T-cell (primary cell): ENCODE measurements at regions of chr7 and their contacts with region 1.

Region 1: GRCh38 chr7:73572767-73573186 is 5.6 kb downstream of the TBL2 start:
- DNase-seq: no peak
- ATAC-seq: no peak
- H3K4me3 ChIP-seq: no peak overlapping the region
- H3K4me3 Mint-ChIP-seq: no peak overlapping the region
- H3K27ac ChIP-seq: no peak overlapping the region
- H3K27ac Mint-ChIP-seq: no peak overlapping the region
- H3K4me1 ChIP-seq: peaks cover 5 to 16% of the 10 kb centered on the region in 2 experiments
- H3K4me1 Mint-ChIP-seq: peaks cover 13 to 25% (median 24%) of the 10 kb centered on the region in 3 donors
- H3K27me3 ChIP-seq: no peaks in the 10 kb centered on the region
- H3K27me3 Mint-ChIP-seq: no peaks in the 10 kb centered on the region

Region 2: GRCh38 chr7:73351447-73352167 is 221.2 kb before region 1 on chr7:
- CTCF ChIA-PET with region 1: no interaction called
- POLR2A ChIA-PET with region 1: interaction called in 1 of 2 experiments, 18 read pairs
- DNase-seq: no peak
- ATAC-seq: no peak
- H3K4me3 ChIP-seq: no peak overlapping the region
- H3K4me3 Mint-ChIP-seq: no peak overlapping the region
- H3K27ac ChIP-seq: no peak overlapping the region
- H3K27ac Mint-ChIP-seq: no peak overlapping the region
- H3K4me1 ChIP-seq: no peaks in the 10 kb centered on the region
- H3K4me1 Mint-ChIP-seq: no peaks in the 10 kb centered on the region
- H3K27me3 ChIP-seq: no peaks in the 10 kb centered on the region
- H3K27me3 Mint-ChIP-seq: no peaks in the 10 kb centered on the region

Region 3: DNA sequence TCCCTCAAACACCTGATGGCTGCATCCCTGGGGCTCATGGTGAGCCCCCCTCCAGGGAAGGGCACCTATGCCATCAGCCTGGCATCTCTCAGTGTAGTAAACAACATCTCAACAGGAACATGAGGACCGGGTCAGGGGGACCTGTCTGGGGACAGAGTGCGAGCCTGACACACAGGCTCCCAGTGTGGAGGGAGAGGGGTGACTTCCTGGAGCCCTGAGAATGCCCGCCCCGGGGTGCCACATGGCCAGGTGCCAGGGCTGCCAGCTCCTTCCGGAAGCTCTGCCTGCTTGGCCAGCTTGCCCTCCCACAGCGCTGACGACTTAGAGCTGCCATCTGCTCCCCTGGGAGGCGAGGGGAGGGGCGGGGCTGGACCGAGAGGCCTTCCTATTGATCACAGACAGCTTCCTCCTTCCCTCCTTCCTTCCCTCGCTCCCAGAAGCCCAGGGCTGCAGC is 134.4 kb after region 1 on chr7:
- CTCF ChIA-PET with region 1: no interaction called
- POLR2A ChIA-PET with region 1: no interaction called
- DNase-seq: peak in 13 of 35 experiments; percentile 17 to 49 (median 34)
- ATAC-seq: peak in 2 of 4 experiments; percentile 44 to 52
- H3K4me3 ChIP-seq: no peak overlapping the region
- H3K4me3 Mint-ChIP-seq: no peak overlapping the region
- H3K27ac ChIP-seq: no peak overlapping the region
- H3K27ac Mint-ChIP-seq: peak overlapping the region; percentile 27 to 52
- H3K4me1 ChIP-seq: peaks cover 0 to 19% of the 10 kb centered on the region in 2 experiments
- H3K4me1 Mint-ChIP-seq: peaks cover 3 to 14% (median 13%) of the 10 kb centered on the region in 3 donors
- H3K27me3 ChIP-seq: no peaks in the 10 kb centered on the region
- H3K27me3 Mint-ChIP-seq: no peaks in the 10 kb centered on the region